HCT116 (cell line): ENCODE measurements at regions of chr6 and their contacts with region 1.

Region 1: DNA sequence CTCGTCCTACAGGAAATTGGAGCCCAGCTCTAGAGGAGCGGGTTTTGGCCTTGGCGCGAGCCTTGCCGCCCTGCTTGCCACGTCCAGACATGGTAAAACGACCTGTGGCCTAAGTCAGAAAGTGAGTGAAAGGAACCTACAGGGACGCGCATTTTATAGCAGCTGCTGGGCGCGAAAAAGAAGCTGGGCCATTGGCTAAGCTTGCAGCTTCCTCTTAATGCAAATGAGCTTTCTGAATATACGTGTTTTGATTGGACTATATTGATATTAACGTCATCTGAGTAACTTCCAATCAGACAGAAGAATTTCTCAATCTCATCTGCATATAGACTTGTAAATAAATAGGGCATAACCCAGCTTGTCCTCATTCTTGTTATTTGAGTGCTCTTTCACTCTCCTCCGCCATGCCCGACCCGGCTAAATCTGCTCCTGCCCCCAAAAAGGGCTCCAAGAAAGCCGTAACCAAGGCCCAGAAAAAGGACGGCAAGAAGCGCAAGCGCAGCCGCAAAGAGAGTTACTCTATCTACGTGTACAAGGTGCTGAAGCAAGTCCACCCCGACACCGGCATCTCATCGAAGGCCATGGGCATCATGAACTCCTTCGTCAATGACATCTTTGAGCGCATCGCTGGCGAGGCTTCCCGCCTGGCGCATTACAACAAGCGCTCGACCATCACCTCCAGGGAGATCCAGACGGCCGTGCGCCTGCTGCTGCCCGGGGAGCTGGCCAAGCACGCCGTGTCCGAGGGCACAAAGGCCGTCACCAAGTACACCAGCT is 18.9 kb downstream of the OR2B2 start:
- DNase-seq: peak; percentile 99
- ATAC-seq: peak; percentile 52
- H3K4me3 ChIP-seq: peak overlapping the region; percentile 74 to 76
- H3K27ac ChIP-seq: peak overlapping the region; percentile 98
- H3K4me1 ChIP-seq: peaks cover 20 to 60% of the 10 kb centered on the region in 2 experiments
- H3K27me3 ChIP-seq: no peaks in the 10 kb centered on the region
- CTCF ChIP-seq: no peak
- POLR2A ChIP-seq: peak; percentile 83
- RAD21 ChIP-seq: no peak

Region 2: DNA sequence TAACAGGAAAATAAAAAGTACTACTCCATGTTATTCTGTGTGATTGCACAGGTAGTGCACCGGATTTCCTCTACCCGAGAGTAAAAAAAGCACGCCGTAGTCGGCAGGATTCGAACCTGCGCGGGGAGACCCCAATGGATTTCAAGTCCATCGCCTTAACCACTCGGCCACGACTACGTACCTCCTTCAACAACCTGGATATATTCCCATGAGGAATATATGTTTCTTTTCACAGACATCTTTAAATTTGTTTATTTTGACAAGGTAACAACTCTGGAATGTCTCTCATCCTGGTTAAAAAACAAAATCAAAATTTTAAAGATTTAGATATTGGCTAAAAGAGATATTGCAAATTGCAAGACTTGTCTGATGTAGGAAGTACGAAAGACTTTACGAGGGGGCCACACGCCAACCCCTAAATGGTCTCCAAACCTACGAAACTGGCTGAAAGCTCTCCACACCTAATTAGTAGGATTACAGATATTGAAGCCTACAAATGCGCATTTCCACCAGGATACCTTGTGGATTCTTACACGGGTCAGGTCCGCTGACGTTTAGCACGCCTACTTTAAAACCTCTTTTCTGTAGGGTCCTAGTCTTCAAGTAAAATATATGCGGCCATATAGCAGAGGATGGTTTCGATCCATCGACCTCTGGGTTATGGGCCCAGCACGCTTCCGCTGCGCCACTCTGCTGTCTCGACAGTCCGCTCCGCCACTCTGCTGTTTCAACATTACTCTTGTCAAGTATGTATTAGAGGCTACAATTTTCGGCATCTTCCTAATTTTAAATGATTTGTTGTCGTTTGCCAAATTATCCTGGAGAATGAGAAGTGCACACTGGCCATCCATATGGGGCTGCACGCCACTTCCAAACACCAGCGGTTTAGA is 1580.5 kb before region 1 on chr6:
- CTCF ChIA-PET with region 1: no interaction called
- POLR2A ChIA-PET with region 1: no interaction called
- RAD21 ChIA-PET with region 1: no interaction called
- intact Hi-C with region 1: loop called (anchors 10 kb)
- DNase-seq: peak; percentile 84
- ATAC-seq: peak; percentile 75
- H3K4me3 ChIP-seq: peak overlapping the region; percentile 28 to 34
- H3K27ac ChIP-seq: peak overlapping the region; percentile 44
- H3K4me1 ChIP-seq: peaks cover 23 to 62% of the 10 kb centered on the region in 2 experiments
- H3K27me3 ChIP-seq: no peaks in the 10 kb centered on the region
- CTCF ChIP-seq: no peak
- POLR2A ChIP-seq: no peak
- RAD21 ChIP-seq: no peak

Region 3: GRCh38 chr6:27157459-27158315 is 735.6 kb before region 1 on chr6:
- CTCF ChIA-PET with region 1: interaction called, 3 read pairs
- POLR2A ChIA-PET with region 1: interaction called, 4 read pairs
- RAD21 ChIA-PET with region 1: no interaction called
- intact Hi-C with region 1: loop called (anchors 2 kb)
- DNase-seq: peak; percentile 65
- ATAC-seq: peak; percentile 87
- H3K4me3 ChIP-seq: peak overlapping the region; percentile 39 to 52
- H3K27ac ChIP-seq: peak overlapping the region; percentile 57
- H3K4me1 ChIP-seq: peaks cover 4 to 41% of the 10 kb centered on the region in 2 experiments; a peak in 3 of 4 replicates
- H3K27me3 ChIP-seq: no peaks in the 10 kb centered on the region
- CTCF ChIP-seq: peak; percentile 44 to 59 (median 56); a peak in 5 of 6 replicates
- POLR2A ChIP-seq: no peak
- RAD21 ChIP-seq: peak; percentile 49

Region 4: GRCh38 chr6:27503436-27504030 is 389.7 kb before region 1 on chr6:
- CTCF ChIA-PET with region 1: no interaction called
- POLR2A ChIA-PET with region 1: no interaction called
- RAD21 ChIA-PET with region 1: no interaction called
- intact Hi-C with region 1: no loop called
- DNase-seq: peak; percentile 72
- ATAC-seq: peak; percentile 51
- H3K4me3 ChIP-seq: peak overlapping the region; percentile 51 to 59
- H3K27ac ChIP-seq: peak overlapping the region; percentile 42
- H3K4me1 ChIP-seq: peaks cover 9 to 34% of the 10 kb centered on the region in 2 experiments; a peak in 3 of 4 replicates
- H3K27me3 ChIP-seq: no peaks in the 10 kb centered on the region
- CTCF ChIP-seq: no peak
- POLR2A ChIP-seq: no peak
- RAD21 ChIP-seq: no peak

Region 5: DNA sequence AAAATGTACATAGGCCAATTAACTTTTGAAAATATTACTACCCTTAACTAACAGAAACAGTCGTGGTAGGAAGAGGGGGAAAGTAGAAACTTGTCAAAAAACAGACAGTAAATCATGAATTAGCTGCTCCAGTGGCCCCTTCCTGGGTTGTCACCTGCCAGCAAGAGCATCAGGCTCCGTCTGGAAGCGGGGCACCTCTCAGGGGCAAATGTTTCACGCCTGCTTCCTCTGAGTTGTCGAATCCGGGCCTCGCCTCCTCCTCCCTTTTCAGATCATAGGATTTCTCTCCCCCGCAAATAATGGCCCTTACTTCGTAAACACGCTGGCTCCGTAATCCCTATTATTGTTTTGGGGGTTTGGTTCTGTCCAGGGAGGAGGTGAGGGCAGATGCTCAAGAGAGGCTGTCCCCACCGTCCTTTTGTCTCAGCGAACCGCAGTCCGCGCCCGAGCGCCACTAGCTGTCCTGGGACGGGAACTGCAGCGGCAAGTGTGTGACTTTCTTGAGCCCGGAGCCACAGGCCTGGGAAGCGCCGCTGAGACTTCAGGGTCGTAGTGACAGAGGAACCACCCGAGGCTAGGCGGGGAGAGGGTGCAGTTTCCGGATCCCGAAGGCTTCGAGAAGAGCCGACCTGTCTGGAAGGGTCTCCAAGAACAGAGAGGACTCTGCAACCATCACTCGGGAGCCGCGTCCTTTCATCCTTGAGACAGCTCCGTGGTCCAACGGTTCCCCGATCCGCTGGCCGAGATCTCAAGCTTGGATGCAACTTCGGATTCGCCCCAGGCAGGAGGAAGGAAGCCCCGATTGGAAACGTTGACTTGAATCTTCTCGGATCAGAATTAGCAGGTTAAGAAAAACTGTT is 205.9 kb before region 1 on chr6:
- CTCF ChIA-PET with region 1: no interaction called
- POLR2A ChIA-PET with region 1: interaction called, 4 read pairs
- RAD21 ChIA-PET with region 1: no interaction called
- intact Hi-C with region 1: loop called (anchors 10 kb)
- DNase-seq: peak; percentile 79
- ATAC-seq: peak; percentile 70
- H3K4me3 ChIP-seq: peak overlapping the region; percentile 54 to 56
- H3K27ac ChIP-seq: peak overlapping the region; percentile 54
- H3K4me1 ChIP-seq: peaks cover 15 to 31% of the 10 kb centered on the region in 2 experiments
- H3K27me3 ChIP-seq: no peaks in the 10 kb centered on the region
- CTCF ChIP-seq: peak; percentile 55 to 81 (median 79); a peak in 5 of 6 replicates
- POLR2A ChIP-seq: no peak
- RAD21 ChIP-seq: peak; percentile 76

Region 6: GRCh38 chr6:27809939-27810767 is 83.1 kb before region 1 on chr6:
- CTCF ChIA-PET with region 1: interaction called, 12 read pairs
- POLR2A ChIA-PET with region 1: interaction called, 302 read pairs
- RAD21 ChIA-PET with region 1: interaction called, 3 read pairs
- intact Hi-C with region 1: loop called (anchors 2 kb)
- DNase-seq: peak; percentile 97
- ATAC-seq: peak; percentile 43
- H3K4me3 ChIP-seq: peak overlapping the region; percentile 59 to 69
- H3K27ac ChIP-seq: peak overlapping the region; percentile 88
- H3K4me1 ChIP-seq: peaks cover 36 to 64% of the 10 kb centered on the region in 2 experiments
- H3K27me3 ChIP-seq: no peaks in the 10 kb centered on the region
- CTCF ChIP-seq: no peak
- POLR2A ChIP-seq: peak; percentile 92
- RAD21 ChIP-seq: no peak

Region 7: GRCh38 chr6:27870343-27870870 is 22.8 kb before region 1 on chr6:
- CTCF ChIA-PET with region 1: no interaction called
- POLR2A ChIA-PET with region 1: interaction called, 10 read pairs
- RAD21 ChIA-PET with region 1: no interaction called
- intact Hi-C with region 1: no loop called
- DNase-seq: no peak
- ATAC-seq: no peak
- H3K4me3 ChIP-seq: no peak overlapping the region
- H3K27ac ChIP-seq: no peak overlapping the region
- H3K4me1 ChIP-seq: no peaks in the 10 kb centered on the region
- H3K27me3 ChIP-seq: no peaks in the 10 kb centered on the region
- CTCF ChIP-seq: no peak
- POLR2A ChIP-seq: no peak
- RAD21 ChIP-seq: no peak

Region 8: GRCh38 chr6:27940766-27941165 is 47.5 kb after region 1 on chr6:
- CTCF ChIA-PET with region 1: no interaction called
- POLR2A ChIA-PET with region 1: no interaction called
- RAD21 ChIA-PET with region 1: no interaction called
- intact Hi-C with region 1: no loop called
- DNase-seq: no peak
- ATAC-seq: no peak
- H3K4me3 ChIP-seq: no peak overlapping the region
- H3K27ac ChIP-seq: no peak overlapping the region
- H3K4me1 ChIP-seq: no peaks in the 10 kb centered on the region
- H3K27me3 ChIP-seq: no peaks in the 10 kb centered on the region
- CTCF ChIP-seq: no peak
- POLR2A ChIP-seq: no peak
- RAD21 ChIP-seq: no peak

Region 9: GRCh38 chr6:28153546-28153945 is 260.3 kb after region 1 on chr6:
- CTCF ChIA-PET with region 1: no interaction called
- POLR2A ChIA-PET with region 1: no interaction called
- RAD21 ChIA-PET with region 1: no interaction called
- intact Hi-C with region 1: no loop called
- DNase-seq: no peak
- ATAC-seq: no peak
- H3K4me3 ChIP-seq: no peak overlapping the region
- H3K27ac ChIP-seq: no peak overlapping the region
- H3K4me1 ChIP-seq: no peaks in the 10 kb centered on the region
- H3K27me3 ChIP-seq: no peaks in the 10 kb centered on the region
- CTCF ChIP-seq: no peak
- POLR2A ChIP-seq: no peak
- RAD21 ChIP-seq: no peak